ENCODE measurements at regions of chr10 and their contacts with region 1.

Region 1: GRCh38 chr10:92440578-92440977 is 133.3 kb downstream of the IDE start:
- DNase-seq: no peak
- ATAC-seq: no peak
- H3K4me3 ChIP-seq: no peak overlapping the region
- H3K27ac ChIP-seq: no peak overlapping the region
- H3K4me1 ChIP-seq: no peaks in the 10 kb centered on the region
- H3K27me3 ChIP-seq: no peaks in the 10 kb centered on the region
- CTCF ChIP-seq: no peak
- POLR2A ChIP-seq: no peak

Region 2: GRCh38 chr10:92248566-92248965 is 192.0 kb before region 1 on chr10:
- intact Hi-C with region 1: no loop called
- DNase-seq: no peak
- ATAC-seq: no peak
- H3K4me3 ChIP-seq: no peak overlapping the region
- H3K27ac ChIP-seq: no peak overlapping the region
- H3K4me1 ChIP-seq: peaks cover 0 to 4% (median 2%) of the 10 kb centered on the region in 12 donors
- H3K27me3 ChIP-seq: no peaks in the 10 kb centered on the region
- CTCF ChIP-seq: no peak
- POLR2A ChIP-seq: no peak

Region 3: DNA sequence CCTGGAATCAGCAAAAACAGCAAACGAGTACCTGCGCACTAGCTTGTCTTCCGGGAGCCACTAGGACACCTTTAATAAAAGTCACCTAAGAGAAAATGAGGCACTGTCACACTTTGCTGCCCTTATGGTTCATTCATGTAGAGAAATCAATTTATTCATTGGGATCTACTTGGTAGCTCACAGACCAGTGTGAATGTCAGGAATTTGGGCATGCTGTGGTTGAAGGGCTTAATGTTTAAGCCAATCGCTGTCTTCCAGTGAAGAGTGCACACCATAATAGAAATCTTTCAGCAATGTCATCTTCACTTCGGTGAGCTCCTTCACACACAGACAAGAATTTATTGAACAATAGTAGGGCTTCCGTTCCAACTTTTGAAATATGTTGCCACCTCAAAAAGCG is 84.5 kb before region 1 on chr10:
- intact Hi-C with region 1: loop called in 1 of 10 experiments (anchors 10 kb)
- DNase-seq: no peak
- ATAC-seq: no peak
- H3K4me3 ChIP-seq: no peak overlapping the region
- H3K27ac ChIP-seq: no peak overlapping the region
- H3K4me1 ChIP-seq: no peaks in the 10 kb centered on the region
- H3K27me3 ChIP-seq: no peaks in the 10 kb centered on the region
- CTCF ChIP-seq: no peak
- POLR2A ChIP-seq: no peak

Region 4: DNA sequence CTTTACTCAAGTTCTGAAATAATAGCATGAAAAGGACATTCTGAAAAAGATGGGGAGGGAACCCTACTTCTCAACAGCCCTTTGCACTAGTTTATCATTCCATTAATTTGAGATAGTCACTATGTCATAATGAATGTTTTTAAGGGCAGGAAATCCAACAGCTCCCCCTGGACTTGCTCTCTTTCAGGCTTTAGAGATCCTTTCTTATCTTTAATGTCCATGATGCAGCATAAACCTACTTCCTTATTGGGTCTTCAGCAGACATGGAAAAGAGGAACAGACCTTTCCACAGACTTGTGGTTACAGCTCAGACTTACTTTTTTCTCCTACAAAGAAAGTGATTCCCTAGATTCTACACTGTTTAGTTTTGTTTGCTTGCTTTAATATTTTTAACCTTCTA is 46.1 kb after region 1 on chr10:
- intact Hi-C with region 1: no loop called
- DNase-seq: no peak
- ATAC-seq: no peak
- H3K4me3 ChIP-seq: no peak overlapping the region
- H3K27ac ChIP-seq: peak overlapping the region in 1 of 12 donors; percentile 6
- H3K4me1 ChIP-seq: peaks cover 0 to 12% (median 0%) of the 10 kb centered on the region in 12 donors
- H3K27me3 ChIP-seq: no peaks in the 10 kb centered on the region
- CTCF ChIP-seq: no peak
- POLR2A ChIP-seq: no peak

Region 5: DNA sequence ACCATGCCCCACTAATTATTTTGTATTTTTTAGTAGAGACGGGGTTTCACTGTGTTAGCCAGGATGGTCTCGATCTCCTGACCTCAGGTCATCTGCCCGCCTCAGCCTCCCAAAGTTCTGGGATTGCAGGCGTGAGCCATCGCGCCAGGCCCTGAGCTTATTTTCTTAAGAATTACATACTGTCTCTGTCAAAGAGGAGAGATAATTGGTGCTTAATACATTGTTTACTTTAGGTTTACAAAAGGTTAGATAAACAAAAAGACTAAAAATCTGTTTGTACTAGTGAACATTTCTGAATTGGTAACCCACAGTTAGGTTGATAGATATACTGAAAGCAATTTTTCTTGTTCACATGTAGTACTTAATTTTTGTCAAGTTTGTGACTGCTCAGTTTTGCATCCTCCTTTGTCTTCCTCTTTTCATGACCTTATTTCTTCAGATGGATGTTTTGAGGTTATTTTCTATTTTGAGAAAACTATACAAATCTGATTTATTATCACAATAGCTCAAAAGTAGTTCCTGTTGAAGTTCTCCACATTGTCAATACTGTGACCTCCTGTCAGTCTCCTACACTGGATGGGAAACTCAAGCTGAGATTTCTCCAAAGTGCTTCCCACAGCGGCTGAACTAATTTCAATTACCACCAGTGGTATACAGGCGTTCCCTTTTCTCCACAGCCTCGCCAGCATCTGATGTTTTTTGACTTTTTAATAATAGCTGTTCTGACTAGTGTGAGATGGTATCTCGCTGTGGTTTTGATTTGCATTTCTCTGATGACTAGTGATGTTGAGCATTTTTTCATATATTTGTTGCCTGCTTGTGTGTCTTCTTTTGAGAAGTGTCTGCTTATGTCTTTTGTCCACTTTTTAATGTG is 271.7 kb after region 1 on chr10:
- intact Hi-C with region 1: no loop called
- DNase-seq: no peak
- ATAC-seq: no peak
- H3K4me3 ChIP-seq: no peak overlapping the region
- H3K27ac ChIP-seq: no peak overlapping the region
- H3K4me1 ChIP-seq: peaks cover 0 to 8% (median 0%) of the 10 kb centered on the region in 12 donors
- H3K27me3 ChIP-seq: peaks cover 0 to 8% (median 0%) of the 10 kb centered on the region in 9 donors
- CTCF ChIP-seq: no peak
- POLR2A ChIP-seq: no peak

Region 6: GRCh38 chr10:93591065-93591808 is 1150.7 kb after region 1 on chr10:
- intact Hi-C with region 1: no loop called
- DNase-seq: no peak
- ATAC-seq: peak in 3 of 4 donors; percentile 53 to 66 (median 55)
- H3K4me3 ChIP-seq: no peak overlapping the region
- H3K27ac ChIP-seq: no peak overlapping the region
- H3K4me1 ChIP-seq: peaks cover 0 to 10% (median 0%) of the 10 kb centered on the region in 12 donors
- H3K27me3 ChIP-seq: peaks cover 0 to 4% (median 0%) of the 10 kb centered on the region in 9 donors
- CTCF ChIP-seq: no peak
- POLR2A ChIP-seq: no peak